Caco-2 (cell line): ENCODE measurements at regions of chr10 and their contacts with region 1.

Region 1: DNA sequence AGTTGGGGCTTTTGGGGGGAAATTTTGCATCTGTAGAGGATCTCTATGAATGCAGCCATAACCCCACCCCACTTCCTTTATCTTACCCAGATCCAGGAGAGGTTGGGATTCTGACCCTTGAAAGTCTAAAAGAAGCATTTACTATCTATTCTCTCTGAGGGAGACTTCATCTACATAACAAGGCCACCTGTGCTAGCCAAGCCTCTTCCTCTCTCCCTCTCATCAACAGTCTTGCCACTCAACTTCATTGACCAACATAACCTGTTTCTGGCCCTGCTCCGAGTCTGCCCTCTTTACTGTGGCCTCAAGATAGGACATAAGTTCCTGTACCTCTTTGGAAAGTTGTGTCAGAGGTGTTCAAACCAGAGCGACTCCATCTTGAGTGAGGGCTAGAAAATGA is 19.4 kb downstream of the TUBAL3 start:
- DNase-seq: no peak
- H3K4me3 ChIP-seq: no peak overlapping the region
- H3K4me3 Mint-ChIP-seq: no peak overlapping the region
- H3K27ac Mint-ChIP-seq: no peak overlapping the region
- H3K4me1 ChIP-seq: no peaks in the 10 kb centered on the region
- H3K4me1 Mint-ChIP-seq: no peaks in the 10 kb centered on the region
- H3K27me3 ChIP-seq: no peaks in the 10 kb centered on the region
- H3K27me3 Mint-ChIP-seq: no peaks in the 10 kb centered on the region
- CTCF ChIP-seq: no peak

Region 2: DNA sequence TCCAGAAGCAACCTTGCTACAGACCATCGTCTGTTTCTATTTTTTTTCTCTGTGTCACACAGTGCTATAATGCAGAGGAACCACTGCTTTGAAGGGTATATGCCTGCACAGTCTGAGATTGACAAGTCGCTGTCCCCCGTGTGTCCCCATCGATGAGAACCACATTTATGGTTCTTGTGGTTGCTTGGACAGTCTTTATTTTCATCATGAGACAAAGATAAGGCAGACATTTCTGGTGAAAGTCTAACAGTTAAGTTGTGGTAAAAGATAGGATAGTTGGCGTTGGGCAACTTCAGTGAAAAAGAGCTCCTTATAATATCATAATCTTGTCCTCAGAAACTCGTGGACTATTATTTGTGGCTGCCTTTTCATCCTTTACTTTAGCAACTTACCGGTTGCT is 565.5 kb before region 1 on chr10:
- CTCF ChIA-PET with region 1: no interaction called
- POLR2A ChIA-PET with region 1: no interaction called
- intact Hi-C with region 1: loop called (anchors 5 kb)
- DNase-seq: no peak
- H3K4me3 ChIP-seq: no peak overlapping the region
- H3K4me3 Mint-ChIP-seq: no peak overlapping the region
- H3K27ac Mint-ChIP-seq: no peak overlapping the region
- H3K4me1 ChIP-seq: peaks cover 9% of the 10 kb centered on the region; the same call in 1 of the 2 replicates
- H3K4me1 Mint-ChIP-seq: no peaks in the 10 kb centered on the region
- H3K27me3 ChIP-seq: no peaks in the 10 kb centered on the region
- H3K27me3 Mint-ChIP-seq: peaks cover 13% of the 10 kb centered on the region
- CTCF ChIP-seq: no peak

Region 3: DNA sequence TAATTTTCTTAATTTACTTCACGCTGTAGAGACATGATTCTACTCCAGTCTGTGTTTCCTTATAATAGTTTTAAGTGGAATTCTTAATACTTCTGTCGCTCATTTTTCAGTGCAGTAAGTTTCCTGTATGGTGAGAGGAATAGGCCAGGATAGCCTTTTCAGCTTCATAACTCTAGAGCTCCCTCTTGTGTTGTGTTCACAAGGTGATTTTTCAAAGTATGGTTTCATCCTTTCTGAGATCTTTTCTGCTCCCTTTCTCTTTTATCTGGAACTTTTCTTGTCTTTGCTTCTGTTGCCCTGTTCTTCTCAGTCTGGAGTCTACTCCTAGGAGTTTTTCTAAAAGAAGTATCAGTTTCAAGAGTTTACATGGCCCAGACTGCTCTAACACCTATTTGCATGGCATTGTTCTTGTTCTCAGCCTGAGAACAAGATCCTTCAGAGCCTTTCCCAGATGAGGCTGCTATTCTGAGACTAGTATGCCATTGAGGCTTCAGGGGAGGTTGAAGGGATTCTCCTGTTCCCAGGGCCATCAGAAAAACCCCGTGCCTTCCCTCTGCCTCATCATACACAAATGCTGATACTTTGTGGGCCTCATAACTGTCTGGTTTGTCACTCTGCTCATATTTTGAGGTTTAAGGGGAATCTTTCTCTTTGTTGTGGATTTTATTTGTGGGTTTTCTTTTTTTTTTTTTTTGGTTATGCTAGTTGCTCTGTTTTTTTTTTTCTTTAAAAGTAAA is 49.0 kb after region 1 on chr10:
- CTCF ChIA-PET with region 1: no interaction called
- POLR2A ChIA-PET with region 1: no interaction called
- intact Hi-C with region 1: loop called (anchors 2 kb)
- DNase-seq: peak in 1 of 2 experiments; percentile 66
- H3K4me3 ChIP-seq: no peak overlapping the region
- H3K4me3 Mint-ChIP-seq: no peak overlapping the region
- H3K27ac Mint-ChIP-seq: no peak overlapping the region
- H3K4me1 ChIP-seq: no peaks in the 10 kb centered on the region
- H3K4me1 Mint-ChIP-seq: peaks cover 17% of the 10 kb centered on the region
- H3K27me3 ChIP-seq: no peaks in the 10 kb centered on the region
- H3K27me3 Mint-ChIP-seq: no peaks in the 10 kb centered on the region
- CTCF ChIP-seq: peak; percentile 81 to 86